Transverse colon (tissue), 4 donors: ENCODE measurements at regions of chr5 and their contacts with region 1.

Region 1: DNA sequence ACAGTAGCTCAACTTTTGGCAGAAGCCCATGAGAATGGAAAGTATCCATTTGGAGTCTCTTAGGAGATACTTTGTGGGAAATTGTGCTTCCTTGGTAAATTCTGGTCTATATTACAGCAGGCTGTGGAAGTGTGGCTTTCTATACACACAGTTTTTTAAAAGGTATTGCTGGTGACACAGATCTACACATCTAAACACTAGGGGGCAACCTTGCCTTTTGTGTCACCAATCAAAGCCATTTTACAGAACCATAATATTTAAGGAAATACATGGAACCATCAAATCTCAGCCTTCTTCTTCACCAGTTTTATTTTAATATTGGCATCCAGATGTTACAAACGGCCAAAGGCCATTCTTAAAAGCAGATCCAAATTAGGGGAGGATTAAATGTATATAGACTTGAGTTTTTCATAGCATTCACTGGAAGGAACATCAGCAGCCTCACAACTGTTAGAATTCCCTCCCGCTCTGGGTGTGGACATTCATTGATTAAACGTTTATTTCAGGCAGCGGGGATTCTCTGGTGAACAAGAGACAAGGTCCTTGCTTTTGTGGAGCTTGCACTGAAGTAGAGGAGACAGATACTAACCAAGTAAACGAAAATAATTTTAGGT is 132.4 kb upstream of the EPB41L4A start:
- DNase-seq: peak; percentile 15
- H3K4me3 ChIP-seq: no peak overlapping the region
- H3K27ac ChIP-seq: no peak overlapping the region
- H3K4me1 ChIP-seq: no peaks in the 10 kb centered on the region
- H3K27me3 ChIP-seq: no peaks in the 10 kb centered on the region
- CTCF ChIP-seq: peak; percentile 68 to 82 (median 76)
- EP300 ChIP-seq: no peak
- POLR2A ChIP-seq: no peak

Region 2: DNA sequence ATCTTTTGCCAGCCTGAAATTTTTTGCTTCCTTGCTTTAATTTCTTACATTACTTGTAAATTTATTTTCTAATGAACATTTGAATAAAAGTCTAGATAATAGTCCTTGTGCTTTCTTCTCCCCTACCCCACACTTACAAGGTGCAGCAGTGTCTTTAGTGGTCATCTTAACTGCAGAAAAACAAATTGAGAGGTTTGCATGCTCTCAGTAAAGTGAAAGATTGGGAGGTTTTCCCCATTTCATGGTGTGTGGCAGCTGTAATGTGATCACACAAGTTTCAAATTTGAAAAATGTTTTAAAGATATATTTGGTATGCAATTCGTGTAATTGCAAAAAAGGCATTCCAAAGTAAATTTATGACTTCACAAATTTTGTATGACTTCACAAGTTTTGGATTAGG is 200.8 kb after region 1 on chr5:
- in situ Hi-C with region 1: loop called (anchors 5 to 10 kb)
- intact Hi-C with region 1: loop called (anchors 2 kb)
- DNase-seq: no peak
- H3K4me3 ChIP-seq: no peak overlapping the region
- H3K27ac ChIP-seq: no peak overlapping the region
- H3K4me1 ChIP-seq: peaks cover 0 to 28% (median 4%) of the 10 kb centered on the region in 4 donors
- H3K27me3 ChIP-seq: no peaks in the 10 kb centered on the region
- CTCF ChIP-seq: no peak
- EP300 ChIP-seq: no peak
- POLR2A ChIP-seq: no peak

Region 3: DNA sequence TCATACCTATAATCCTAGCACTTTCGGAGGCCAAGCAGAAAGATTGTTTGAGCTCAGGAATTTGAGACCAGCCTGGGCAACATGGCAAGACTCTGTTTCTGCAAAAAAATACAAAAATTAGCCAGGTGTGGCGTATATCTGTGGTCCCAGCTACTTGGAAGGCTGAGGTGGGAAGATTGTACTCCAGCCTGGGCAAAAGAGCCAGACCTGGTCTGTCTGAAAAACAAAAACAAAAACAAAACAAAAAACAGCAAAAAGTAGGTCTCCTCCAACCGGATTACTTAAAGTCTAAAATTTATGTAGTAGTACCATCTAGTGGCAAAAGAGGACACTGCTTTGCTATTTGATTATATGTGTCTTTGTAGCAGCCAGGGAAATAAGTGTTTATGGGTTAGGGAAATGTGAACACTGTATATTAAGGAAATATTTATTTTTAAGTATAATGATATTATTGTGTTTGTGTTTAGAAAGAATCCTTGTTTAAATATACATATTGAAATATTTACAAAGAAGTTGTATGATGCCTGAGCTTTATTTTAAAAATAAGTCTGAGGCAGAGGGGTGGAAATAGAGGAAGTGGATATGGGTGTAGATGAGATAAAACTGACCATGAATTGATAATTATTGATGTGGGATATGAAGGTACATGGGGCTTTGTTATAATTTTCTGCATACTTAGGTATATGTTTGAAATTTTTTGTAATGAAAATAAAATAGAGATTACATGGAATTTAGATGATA is 206.1 kb after region 1 on chr5:
- in situ Hi-C with region 1: loop called (anchors 5 to 10 kb)
- intact Hi-C with region 1: loop called (anchors 2 kb)
- DNase-seq: no peak
- H3K4me3 ChIP-seq: no peak overlapping the region
- H3K27ac ChIP-seq: no peak overlapping the region
- H3K4me1 ChIP-seq: peaks cover 0 to 22% (median 2%) of the 10 kb centered on the region in 4 donors
- H3K27me3 ChIP-seq: no peaks in the 10 kb centered on the region
- CTCF ChIP-seq: peak; percentile 78 to 88 (median 83)
- EP300 ChIP-seq: no peak
- POLR2A ChIP-seq: no peak

Region 4: GRCh38 chr5:112930082-112930344 is 378.5 kb after region 1 on chr5:
- in situ Hi-C with region 1: loop called in 1 of 4 experiments (anchors 25 kb)
- intact Hi-C with region 1: no loop called
- DNase-seq: no peak
- H3K4me3 ChIP-seq: no peak overlapping the region
- H3K27ac ChIP-seq: no peak overlapping the region
- H3K4me1 ChIP-seq: no peaks in the 10 kb centered on the region
- H3K27me3 ChIP-seq: no peaks in the 10 kb centered on the region
- CTCF ChIP-seq: no peak
- EP300 ChIP-seq: no peak
- POLR2A ChIP-seq: no peak